ENCODE measurements at regions of chr15 and their contacts with region 1.

Region 1: DNA sequence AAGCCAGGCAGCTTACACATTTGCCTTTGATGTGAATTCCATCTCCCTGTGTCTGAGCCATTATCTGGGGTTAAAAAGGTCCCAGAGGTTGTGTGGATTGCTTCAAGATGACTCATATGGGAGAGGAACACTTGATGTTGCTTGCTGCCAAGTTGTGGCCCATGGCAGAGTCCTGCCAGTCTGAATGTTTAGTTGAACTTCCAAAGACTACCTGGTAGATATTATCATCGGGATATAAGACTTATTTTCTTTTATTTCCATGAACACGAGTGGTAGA is 85.6 kb downstream of the TJP1 start:
- DNase-seq: peak in 1 of 2 donors; percentile 36
- H3K4me3 ChIP-seq: no peak overlapping the region
- H3K27ac ChIP-seq: no peak overlapping the region
- H3K4me1 ChIP-seq: peaks cover 5 to 27% of the 10 kb centered on the region in 2 donors
- H3K27me3 ChIP-seq: no peaks in the 10 kb centered on the region
- CTCF ChIP-seq: no peak
- POLR2A ChIP-seq: no peak

Region 2: GRCh38 chr15:29674661-29675533 is 61.8 kb before region 1 on chr15:
- intact Hi-C with region 1: loop called (anchors 10 kb)
- DNase-seq: peak; percentile 76 to 77
- H3K4me3 ChIP-seq: peak overlapping the region; percentile 39 to 47 (median 41)
- H3K27ac ChIP-seq: no peak overlapping the region
- H3K4me1 ChIP-seq: peaks cover 3 to 14% of the 10 kb centered on the region in 2 donors
- H3K27me3 ChIP-seq: no peaks in the 10 kb centered on the region
- CTCF ChIP-seq: no peak
- POLR2A ChIP-seq: no peak